Endothelial cell of umbilical vein (primary cell): ENCODE measurements at regions of chr6 and their contacts with region 1.

Region 1: GRCh38 chr6:52995913-52996645 is 995 bp upstream of the GSTA4 start:
- DNase-seq: peak; percentile 69
- H3K4me3 ChIP-seq: peak overlapping the region in 1 of 3 experiments; percentile 19
- H3K27ac ChIP-seq: no peak overlapping the region
- H3K4me1 ChIP-seq: peaks cover 13% of the 10 kb centered on the region
- H3K27me3 ChIP-seq: no peaks in the 10 kb centered on the region
- CTCF ChIP-seq: no peak
- POLR2A ChIP-seq: no peak

Region 2: DNA sequence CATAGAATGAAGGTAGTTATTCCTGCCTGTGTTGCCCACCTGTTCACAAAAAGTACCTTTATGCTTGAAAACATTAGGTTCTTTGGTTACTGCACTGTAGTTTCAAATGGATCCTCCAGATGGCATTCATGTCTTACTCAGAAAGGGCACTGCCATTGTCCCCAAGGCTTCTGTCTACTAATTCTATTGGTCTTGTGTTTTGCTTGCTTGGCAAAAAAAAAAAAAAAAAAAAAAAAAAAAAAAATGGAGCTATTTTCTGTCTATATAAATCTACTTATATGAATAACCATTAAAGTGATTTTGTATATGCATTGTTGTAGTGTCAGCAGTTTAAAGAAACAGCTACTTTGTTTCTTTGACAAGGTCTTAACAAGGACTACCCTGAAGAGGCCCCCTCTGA is 588.6 kb before region 1 on chr6:
- CTCF ChIA-PET with region 1: interaction called, 6 read pairs
- POLR2A ChIA-PET with region 1: no interaction called
- dilution Hi-C with region 1: no loop called
- intact Hi-C with region 1: loop called (anchors 1 kb)
- DNase-seq: peak; percentile 71
- H3K4me3 ChIP-seq: no peak overlapping the region
- H3K27ac ChIP-seq: no peak overlapping the region
- H3K4me1 ChIP-seq: no peaks in the 10 kb centered on the region
- H3K27me3 ChIP-seq: no peaks in the 10 kb centered on the region
- CTCF ChIP-seq: peak; percentile 45 to 58
- POLR2A ChIP-seq: no peak

Region 3: DNA sequence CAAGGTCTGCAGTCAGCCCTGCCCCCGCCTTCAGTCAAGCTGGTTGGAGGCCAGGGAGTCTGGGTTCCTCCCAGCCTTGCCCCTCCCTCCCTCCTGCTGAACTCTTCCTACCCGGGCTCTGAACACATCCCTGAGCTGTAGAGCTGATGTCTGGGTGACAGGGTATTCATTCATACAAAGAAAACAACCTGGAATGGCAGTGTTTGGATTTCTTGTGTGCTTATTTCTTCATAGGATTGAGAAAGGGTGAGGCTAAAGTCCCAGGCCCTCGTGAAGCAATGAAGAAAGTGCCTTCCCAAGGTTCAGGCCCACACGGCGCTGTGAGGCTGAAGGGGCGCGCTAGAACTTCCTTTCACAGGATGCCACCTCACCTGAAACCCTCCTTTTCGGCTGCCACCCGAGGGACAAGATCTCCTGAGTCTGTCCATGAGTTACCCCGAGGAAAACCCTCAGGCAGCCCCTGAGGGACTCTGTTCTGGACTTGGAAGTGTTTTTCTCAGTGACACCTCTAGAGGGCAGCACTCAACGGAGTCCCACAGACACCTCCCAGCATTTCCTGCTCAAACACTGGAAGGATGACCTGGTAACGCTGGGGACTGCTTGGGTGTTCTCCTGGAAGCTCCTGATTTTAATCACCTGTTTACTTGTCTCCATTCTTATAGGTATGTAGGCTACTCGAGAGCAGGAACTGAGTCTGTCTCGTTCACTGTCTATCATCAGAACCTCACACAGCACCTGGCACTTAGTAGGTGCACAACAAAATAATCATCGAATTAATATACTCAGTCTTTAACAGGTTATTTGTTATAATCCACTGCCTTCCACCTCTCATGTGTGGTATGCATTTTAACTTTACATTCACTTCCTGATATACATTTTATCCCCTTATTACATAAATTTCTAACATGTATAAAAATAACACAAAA is 180.6 kb before region 1 on chr6:
- CTCF ChIA-PET with region 1: no interaction called
- POLR2A ChIA-PET with region 1: no interaction called
- dilution Hi-C with region 1: no loop called
- intact Hi-C with region 1: loop called (anchors 1 kb)
- DNase-seq: peak; percentile 14
- H3K4me3 ChIP-seq: no peak overlapping the region
- H3K27ac ChIP-seq: no peak overlapping the region
- H3K4me1 ChIP-seq: no peaks in the 10 kb centered on the region
- H3K27me3 ChIP-seq: peaks cover 0 to 8% of the 10 kb centered on the region in 2 experiments
- CTCF ChIP-seq: peak; percentile 54 to 66
- POLR2A ChIP-seq: no peak

Region 4: DNA sequence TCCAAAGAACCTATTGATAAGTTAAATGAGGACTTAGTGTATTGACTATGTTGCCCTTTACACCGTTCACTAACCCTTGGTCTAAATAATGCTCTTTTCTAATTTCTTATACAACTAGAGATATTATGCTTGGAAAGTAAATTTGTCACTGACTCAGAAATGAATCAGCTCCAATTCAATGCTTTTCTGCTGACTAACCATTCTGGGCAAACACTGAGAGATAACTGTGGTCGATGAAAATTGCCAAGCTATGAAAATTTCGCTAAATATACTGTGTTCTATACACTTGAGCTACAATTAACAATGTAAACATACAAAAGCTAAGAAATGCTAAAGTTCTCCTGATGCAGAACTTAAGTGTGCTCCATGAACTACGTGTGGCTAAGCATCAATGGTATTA is 46.0 kb after region 1 on chr6:
- CTCF ChIA-PET with region 1: interaction called, 26 read pairs
- POLR2A ChIA-PET with region 1: interaction called, 3 read pairs
- dilution Hi-C with region 1: no loop called
- intact Hi-C with region 1: no loop called
- DNase-seq: peak; percentile 56
- H3K4me3 ChIP-seq: no peak overlapping the region
- H3K27ac ChIP-seq: no peak overlapping the region
- H3K4me1 ChIP-seq: peaks cover 16% of the 10 kb centered on the region
- H3K27me3 ChIP-seq: no peaks in the 10 kb centered on the region
- CTCF ChIP-seq: no peak
- POLR2A ChIP-seq: no peak

Region 5: DNA sequence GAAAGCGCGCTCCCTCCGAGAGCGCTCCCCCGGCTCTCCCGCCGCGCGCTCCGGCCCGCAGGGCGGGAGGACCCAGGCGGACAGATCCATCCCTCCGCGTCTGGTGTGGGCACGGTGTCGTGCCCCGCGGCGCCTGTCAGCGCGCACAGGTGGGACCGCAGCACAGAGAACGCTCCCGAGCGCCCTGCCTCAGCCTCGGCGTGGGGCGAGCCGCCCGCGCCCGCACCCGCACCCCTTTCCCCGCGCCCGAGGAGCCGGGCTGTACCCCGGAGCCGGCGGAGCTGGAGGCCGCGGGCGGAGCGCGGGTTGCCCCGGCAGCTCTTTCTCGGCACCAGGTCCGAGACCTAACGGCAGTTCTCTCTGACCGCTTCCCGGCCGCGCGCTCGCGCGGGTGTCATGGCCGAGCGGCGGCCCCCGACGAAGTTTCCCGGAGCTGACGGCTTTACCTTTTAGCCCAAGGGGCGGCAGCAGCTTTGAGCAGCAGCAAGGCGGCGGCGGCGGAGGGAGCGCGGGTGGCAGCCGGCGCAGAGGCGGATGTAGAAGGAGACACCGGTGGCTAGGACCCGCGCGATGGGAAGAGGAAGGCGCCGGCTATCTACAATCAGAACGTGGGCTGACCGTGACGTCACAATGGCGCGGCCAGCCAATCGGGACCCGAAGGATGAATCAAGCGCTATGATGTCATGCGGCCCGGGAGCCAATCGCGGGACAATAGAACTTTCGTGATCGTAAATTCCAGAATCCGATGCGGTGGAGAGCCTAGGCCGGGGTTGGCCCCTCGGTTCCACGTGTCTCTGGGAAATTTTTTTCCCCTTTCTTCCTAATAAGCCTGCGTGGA is 352.5 kb after region 1 on chr6 and contains the start of gene ELOVL5:
- CTCF ChIA-PET with region 1: no interaction called
- POLR2A ChIA-PET with region 1: no interaction called
- dilution Hi-C with region 1: no loop called
- intact Hi-C with region 1: loop called (anchors 10 kb)
- DNase-seq: peak; percentile 98
- H3K4me3 ChIP-seq: peak within 1 kb of the TSS; percentile 87 to 97 (median 88)
- H3K27ac ChIP-seq: peak within 1 kb of the TSS; percentile 96
- H3K4me1 ChIP-seq: peaks cover 12% of the 10 kb centered on the region
- H3K27me3 ChIP-seq: peaks cover 5 to 14% of the 10 kb centered on the region in 2 experiments
- CTCF ChIP-seq: no peak
- POLR2A ChIP-seq: no peak
- total RNA-seq, gene ELOVL5: 140 and 149 TPM in 2 replicates

Region 6: DNA sequence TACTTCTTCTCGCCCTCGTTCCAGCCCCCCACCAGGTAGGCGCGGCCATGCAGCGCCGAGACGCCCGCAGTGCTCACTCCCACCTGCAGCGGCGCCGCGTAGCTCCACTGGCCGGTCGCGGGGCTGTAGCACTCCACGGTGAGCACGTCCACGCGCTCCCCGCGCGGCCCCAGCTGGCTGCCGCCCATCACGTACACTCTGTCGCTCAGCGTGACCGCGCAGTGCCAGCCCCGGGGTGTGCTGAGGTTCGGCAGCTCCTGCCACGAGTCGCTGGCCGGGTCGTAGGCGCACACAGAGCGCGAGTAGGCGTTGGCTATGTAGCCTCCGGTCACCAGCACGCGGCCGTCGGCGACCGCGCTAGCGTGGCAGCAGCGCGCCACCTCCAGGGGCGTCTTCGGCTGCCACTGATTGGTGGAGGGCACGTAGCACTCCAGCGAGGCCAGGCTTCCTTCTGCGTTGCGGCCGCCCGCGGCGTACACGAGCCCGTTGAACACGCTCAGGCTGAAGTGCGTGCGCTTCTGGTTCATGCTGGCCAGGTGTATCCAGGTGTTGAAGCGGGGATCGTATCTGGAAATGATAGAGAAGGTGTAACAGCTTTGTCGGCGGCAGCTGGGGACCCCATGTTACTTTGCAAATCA is 655.8 kb after region 1 on chr6:
- CTCF ChIA-PET with region 1: no interaction called
- POLR2A ChIA-PET with region 1: no interaction called
- dilution Hi-C with region 1: no loop called
- intact Hi-C with region 1: loop called (anchors 5 kb)
- DNase-seq: peak; percentile 64
- H3K4me3 ChIP-seq: peak overlapping the region in 2 of 3 experiments; percentile 42 to 48
- H3K27ac ChIP-seq: no peak overlapping the region
- H3K4me1 ChIP-seq: peaks cover 5% of the 10 kb centered on the region
- H3K27me3 ChIP-seq: peaks cover 9 to 10% of the 10 kb centered on the region in 2 experiments
- CTCF ChIP-seq: peak in 1 of 2 donors; percentile 48
- POLR2A ChIP-seq: no peak